ENCODE measurements at regions of chr12 and their contacts with region 1.

Region 1: GRCh38 chr12:66688846-66689439 is 10.1 kb upstream of the GRIP1 start:
- DNase-seq: peak; percentile 44
- H3K4me3 ChIP-seq: no peak overlapping the region
- H3K27ac ChIP-seq: no peak overlapping the region
- H3K4me1 ChIP-seq: no peaks in the 10 kb centered on the region
- H3K27me3 ChIP-seq: no peaks in the 10 kb centered on the region
- CTCF ChIP-seq: peak; percentile 54 to 73

Region 2: GRCh38 chr12:66860752-66861750 is 172.1 kb after region 1 on chr12:
- CTCF ChIA-PET with region 1: no interaction called
- dilution Hi-C with region 1: no loop called
- in situ Hi-C with region 1: no loop called
- intact Hi-C with region 1: loop called (anchors 1 kb)
- DNase-seq: peak; percentile 33
- H3K4me3 ChIP-seq: no peak overlapping the region
- H3K27ac ChIP-seq: no peak overlapping the region
- H3K4me1 ChIP-seq: peaks cover 4% of the 10 kb centered on the region
- H3K27me3 ChIP-seq: no peaks in the 10 kb centered on the region
- CTCF ChIP-seq: peak; percentile 94 to 97

Region 3: GRCh38 chr12:67222302-67222701 is 533.4 kb after region 1 on chr12:
- CTCF ChIA-PET with region 1: no interaction called
- dilution Hi-C with region 1: no loop called
- in situ Hi-C with region 1: no loop called
- intact Hi-C with region 1: loop called (anchors 5 kb)
- DNase-seq: peak; percentile 45
- H3K4me3 ChIP-seq: no peak overlapping the region
- H3K27ac ChIP-seq: no peak overlapping the region
- H3K4me1 ChIP-seq: no peaks in the 10 kb centered on the region
- H3K27me3 ChIP-seq: peaks cover 2% of the 10 kb centered on the region
- CTCF ChIP-seq: peak; percentile 60 to 69

Region 4: GRCh38 chr12:67254372-67255026 is 565.6 kb after region 1 on chr12:
- CTCF ChIA-PET with region 1: interaction called, 11 read pairs
- dilution Hi-C with region 1: no loop called
- in situ Hi-C with region 1: no loop called
- intact Hi-C with region 1: no loop called
- DNase-seq: no peak
- H3K4me3 ChIP-seq: no peak overlapping the region
- H3K27ac ChIP-seq: no peak overlapping the region
- H3K4me1 ChIP-seq: no peaks in the 10 kb centered on the region
- H3K27me3 ChIP-seq: peaks cover 1% of the 10 kb centered on the region
- CTCF ChIP-seq: no peak

Region 5: GRCh38 chr12:67415473-67415872 is 726.5 kb after region 1 on chr12:
- CTCF ChIA-PET with region 1: no interaction called
- dilution Hi-C with region 1: no loop called
- in situ Hi-C with region 1: no loop called
- intact Hi-C with region 1: loop called (anchors 10 kb)
- DNase-seq: peak; percentile 32
- H3K4me3 ChIP-seq: no peak overlapping the region
- H3K27ac ChIP-seq: no peak overlapping the region
- H3K4me1 ChIP-seq: peaks cover 10% of the 10 kb centered on the region
- H3K27me3 ChIP-seq: no peaks in the 10 kb centered on the region
- CTCF ChIP-seq: peak; percentile 32 to 75